ENCODE measurements at regions of chr6 and their contacts with region 1.

Region 1: DNA sequence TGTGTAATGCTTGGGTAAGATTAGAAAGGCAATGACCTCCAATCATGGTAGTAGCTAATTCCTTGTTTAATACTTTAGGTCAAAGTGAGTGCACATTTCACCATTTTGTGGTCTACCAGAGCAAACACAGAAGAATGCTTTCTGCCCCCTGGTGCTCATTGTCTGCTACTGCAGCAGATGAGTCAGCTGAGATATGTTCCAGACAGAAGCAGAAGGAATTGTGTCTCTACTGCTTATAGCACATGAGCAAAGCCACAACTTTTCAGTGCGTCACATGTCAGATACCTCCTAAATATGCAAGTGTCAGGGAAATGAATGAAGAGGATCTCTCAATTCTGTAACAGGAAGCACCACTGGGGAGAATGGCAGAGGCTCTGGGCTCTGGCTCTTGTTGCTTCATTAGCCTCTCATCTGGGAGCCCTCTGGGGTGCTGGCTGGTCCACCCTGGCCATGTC is 308.9 kb downstream of the ALDH8A1 start:
- DNase-seq: peak; percentile 65 to 82
- H3K4me3 ChIP-seq: no peak overlapping the region
- H3K27ac ChIP-seq: no peak overlapping the region
- H3K4me1 ChIP-seq: peaks cover 32% of the 10 kb centered on the region
- H3K27me3 ChIP-seq: no peaks in the 10 kb centered on the region
- CTCF ChIP-seq: peak; percentile 98

Region 2: GRCh38 chr6:134436281-134436815 is 204.7 kb before region 1 on chr6:
- CTCF ChIA-PET with region 1: no interaction called
- POLR2A ChIA-PET with region 1: no interaction called
- intact Hi-C with region 1: loop called (anchors 5 kb)
- DNase-seq: peak; percentile 75 to 96
- H3K4me3 ChIP-seq: peak overlapping the region; percentile 36; the same call in 1 of the 2 replicates
- H3K27ac ChIP-seq: peak overlapping the region; percentile 85
- H3K4me1 ChIP-seq: peaks cover 29% of the 10 kb centered on the region
- H3K27me3 ChIP-seq: no peaks in the 10 kb centered on the region
- CTCF ChIP-seq: no peak

Region 3: GRCh38 chr6:134453870-134454510 is 187.0 kb before region 1 on chr6:
- CTCF ChIA-PET with region 1: no interaction called
- POLR2A ChIA-PET with region 1: no interaction called
- intact Hi-C with region 1: no loop called
- DNase-seq: peak; percentile 21 to 55
- H3K4me3 ChIP-seq: no peak overlapping the region
- H3K27ac ChIP-seq: no peak overlapping the region
- H3K4me1 ChIP-seq: peaks cover 20% of the 10 kb centered on the region
- H3K27me3 ChIP-seq: no peaks in the 10 kb centered on the region
- CTCF ChIP-seq: no peak

Region 4: DNA sequence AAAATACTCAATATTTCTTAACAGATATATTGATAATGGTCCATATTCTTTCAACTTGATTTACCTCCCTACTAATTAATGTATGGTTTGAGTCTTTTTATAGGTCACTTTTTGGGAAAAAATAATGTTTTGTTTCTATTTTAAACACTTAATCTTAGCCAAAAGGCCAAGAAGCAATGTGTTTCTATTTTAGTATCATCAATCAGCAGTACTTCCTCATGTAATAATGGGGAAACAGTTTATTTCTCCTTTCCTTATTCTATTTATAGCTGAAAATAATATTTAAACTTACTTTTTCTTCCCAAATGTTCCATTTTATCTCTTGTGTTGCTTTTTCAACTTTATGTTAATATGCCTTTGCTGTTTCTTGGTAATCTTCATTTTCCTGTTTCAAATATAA is 13.7 kb after region 1 on chr6:
- CTCF ChIA-PET with region 1: interaction called, 3 read pairs
- POLR2A ChIA-PET with region 1: interaction called, 20 read pairs
- intact Hi-C with region 1: no loop called
- DNase-seq: no peak
- H3K4me3 ChIP-seq: no peak overlapping the region
- H3K27ac ChIP-seq: no peak overlapping the region
- H3K4me1 ChIP-seq: peaks cover 10% of the 10 kb centered on the region
- H3K27me3 ChIP-seq: no peaks in the 10 kb centered on the region
- CTCF ChIP-seq: no peak

Region 5: DNA sequence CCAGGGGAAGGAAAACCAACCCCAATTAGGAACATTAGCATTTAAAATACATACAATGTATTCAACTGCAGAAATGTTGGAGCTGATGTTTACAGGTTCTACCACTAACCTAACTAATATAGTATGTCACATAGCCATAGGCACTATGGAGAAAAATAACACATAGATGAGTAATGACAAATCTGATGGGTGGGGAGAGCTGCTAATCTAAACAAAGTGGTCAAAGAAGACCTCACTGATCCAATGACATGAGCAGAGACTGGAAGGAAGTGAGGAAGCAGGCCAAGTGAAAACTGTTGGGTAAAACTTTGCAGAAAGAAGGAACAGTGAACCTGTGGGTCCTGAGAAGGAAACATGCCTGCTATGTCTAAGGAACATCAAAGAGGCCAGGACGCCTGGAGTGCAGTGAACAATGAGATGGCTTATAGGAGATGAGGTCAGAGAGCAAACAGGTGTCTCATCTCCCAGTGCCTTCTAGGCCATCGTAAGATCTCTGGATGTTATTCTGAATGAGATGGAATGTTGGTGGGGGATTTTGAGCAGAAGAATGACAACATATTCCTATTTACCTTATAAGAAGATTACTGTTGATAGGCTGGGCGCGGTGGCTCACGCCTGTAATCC is 173.2 kb after region 1 on chr6:
- CTCF ChIA-PET with region 1: no interaction called
- POLR2A ChIA-PET with region 1: no interaction called
- intact Hi-C with region 1: loop called (anchors 2 kb)
- DNase-seq: peak; percentile 18 to 94
- H3K4me3 ChIP-seq: no peak overlapping the region
- H3K27ac ChIP-seq: peak overlapping the region; percentile 42
- H3K4me1 ChIP-seq: peaks cover 26% of the 10 kb centered on the region
- H3K27me3 ChIP-seq: no peaks in the 10 kb centered on the region
- CTCF ChIP-seq: no peak